Right ventricle myocardium inferior (tissue), 1 donor: ENCODE measurements at regions of chr20 and their contacts with region 1.

Region 1: GRCh38 chr20:41232973-41233926 is 84.3 kb downstream of the ZHX3 start:
- DNase-seq: no peak
- ATAC-seq: peak; percentile 30

Region 2: GRCh38 chr20:41161886-41162285 is 71.4 kb before region 1 on chr20:
- intact Hi-C with region 1: no loop called
- DNase-seq: no peak
- ATAC-seq: no peak

Region 3: DNA sequence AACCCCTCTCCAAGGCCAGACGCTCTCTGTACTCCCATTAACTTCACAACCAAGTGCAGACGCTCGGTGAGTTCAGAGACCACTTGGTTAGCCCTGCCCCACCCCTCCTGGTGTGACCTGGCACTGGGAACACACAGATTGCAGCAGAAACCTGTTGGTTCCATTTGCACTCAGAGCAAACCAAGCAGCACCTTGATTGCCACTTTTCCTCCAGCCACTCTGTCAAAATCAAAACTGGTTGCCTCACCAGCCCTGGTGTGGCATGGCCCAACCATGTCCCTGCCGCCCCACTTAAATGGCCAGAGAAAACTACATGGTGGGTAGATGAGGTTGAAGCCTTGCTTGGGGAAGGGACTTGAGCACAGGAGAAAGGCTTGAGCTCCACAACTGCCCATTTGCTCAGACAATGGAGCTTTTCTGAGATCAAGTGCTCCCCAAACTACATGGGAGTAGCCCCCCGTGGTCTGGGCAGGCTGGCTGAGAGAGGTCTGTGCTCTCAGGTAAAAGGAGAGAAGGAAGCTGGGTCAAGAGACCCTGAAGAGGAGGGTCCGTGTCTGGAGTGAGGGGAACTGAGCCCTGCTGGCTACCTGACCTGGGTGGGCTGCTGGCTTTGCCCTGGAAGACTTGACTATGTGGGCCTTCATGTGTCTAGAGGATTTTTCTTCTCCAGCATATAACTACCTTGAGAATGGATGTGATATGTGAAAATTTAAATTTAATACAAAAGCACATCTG is 52.5 kb before region 1 on chr20:
- intact Hi-C with region 1: loop called (anchors 2 kb)
- DNase-seq: no peak
- ATAC-seq: no peak

Region 4: GRCh38 chr20:41249406-41250281 is 16.4 kb after region 1 on chr20:
- intact Hi-C with region 1: loop called (anchors 1 kb)
- DNase-seq: peak; percentile 75
- ATAC-seq: peak; percentile 86